ENCODE measurements at regions of chr6 and their contacts with region 1.

Region 1: DNA sequence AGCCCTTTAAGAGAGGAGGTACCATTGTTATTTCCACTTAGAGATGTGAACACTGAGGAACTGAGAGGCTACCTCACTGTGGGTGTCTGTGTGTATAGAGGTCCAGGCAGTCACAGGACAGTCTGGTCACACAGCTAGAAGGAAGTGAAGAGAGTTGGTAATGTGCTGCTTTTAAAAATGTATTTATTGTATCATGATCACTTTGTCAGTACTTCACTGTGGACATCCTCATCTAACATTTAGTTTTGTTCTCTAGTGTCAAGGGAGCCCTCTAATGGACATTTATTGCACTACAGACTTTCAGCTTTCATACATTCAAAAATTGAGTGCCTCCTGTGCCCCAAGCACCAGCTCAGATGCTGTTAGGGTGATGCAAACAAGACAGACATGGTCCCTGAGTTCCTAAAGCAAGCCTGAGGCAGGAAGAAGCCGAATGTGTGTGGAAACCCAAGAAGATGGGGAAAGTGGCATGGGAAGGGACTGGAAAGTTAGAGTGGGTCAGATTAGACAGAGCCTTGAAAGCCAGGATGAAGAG is 123.0 kb downstream of the SLC16A10 start:
- DNase-seq: peak; percentile 73
- ATAC-seq: peak; percentile 91
- H3K4me3 ChIP-seq: no peak overlapping the region
- H3K27ac ChIP-seq: no peak overlapping the region
- H3K4me1 ChIP-seq: no peaks in the 10 kb centered on the region
- H3K27me3 ChIP-seq: peaks cover 6% of the 10 kb centered on the region; the same call in 1 of the 2 replicates
- CTCF ChIP-seq: peak; percentile 93

Region 2: GRCh38 chr6:110528101-110528929 is 681.9 kb before region 1 on chr6:
- CTCF ChIA-PET with region 1: no interaction called
- POLR2A ChIA-PET with region 1: no interaction called
- in situ Hi-C with region 1: no loop called
- intact Hi-C with region 1: loop called (anchors 10 kb)
- DNase-seq: peak; percentile 86
- ATAC-seq: peak; percentile 85
- H3K4me3 ChIP-seq: no peak overlapping the region
- H3K27ac ChIP-seq: peak overlapping the region; percentile 58; the same call in 1 of the 2 replicates
- H3K4me1 ChIP-seq: peaks cover 17% of the 10 kb centered on the region
- H3K27me3 ChIP-seq: no peaks in the 10 kb centered on the region
- CTCF ChIP-seq: peak; percentile 90

Region 3: GRCh38 chr6:110990840-110991576 is 219.3 kb before region 1 on chr6:
- CTCF ChIA-PET with region 1: interaction called, 10 read pairs
- POLR2A ChIA-PET with region 1: no interaction called
- in situ Hi-C with region 1: no loop called
- intact Hi-C with region 1: no loop called
- DNase-seq: no peak
- ATAC-seq: no peak
- H3K4me3 ChIP-seq: no peak overlapping the region
- H3K27ac ChIP-seq: no peak overlapping the region
- H3K4me1 ChIP-seq: no peaks in the 10 kb centered on the region
- H3K27me3 ChIP-seq: no peaks in the 10 kb centered on the region
- CTCF ChIP-seq: no peak

Region 4: DNA sequence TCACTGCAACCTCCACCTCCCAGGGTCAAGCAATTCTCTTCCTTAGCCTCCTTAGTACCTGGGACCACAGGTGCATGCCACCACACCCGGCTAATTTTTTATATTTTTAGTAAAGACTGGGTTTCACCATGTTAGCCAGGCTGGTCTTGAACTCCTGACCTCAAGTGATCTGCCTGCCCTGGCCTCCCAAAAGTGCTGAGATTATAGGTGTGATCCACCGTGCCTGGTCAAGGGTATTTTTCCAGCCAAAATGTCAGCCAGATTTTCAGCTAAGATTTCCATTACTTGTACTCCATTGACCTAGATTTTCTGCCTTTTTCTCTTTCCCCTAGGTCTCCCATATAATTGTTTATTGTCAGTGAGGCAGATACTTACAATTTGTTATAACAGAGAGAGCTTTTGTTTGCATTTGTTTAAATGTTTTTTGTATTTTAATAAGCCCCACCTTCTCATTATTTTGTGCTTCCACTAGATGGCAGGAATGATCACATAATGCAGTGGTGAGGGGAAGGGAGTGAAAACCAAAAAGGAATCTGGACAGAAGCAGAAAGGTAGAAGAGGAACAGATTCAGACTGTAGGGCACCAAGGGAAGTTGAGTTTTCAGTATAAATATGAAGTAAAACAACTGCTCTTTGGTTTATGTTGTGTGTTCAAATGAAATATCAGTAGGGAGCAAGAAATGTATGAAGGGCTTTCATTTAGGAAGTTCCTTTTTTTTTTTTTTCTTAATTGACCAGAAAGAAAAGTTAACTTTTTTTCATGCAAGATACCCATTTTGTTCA is 198.7 kb before region 1 on chr6:
- CTCF ChIA-PET with region 1: interaction called, 6 read pairs
- POLR2A ChIA-PET with region 1: no interaction called
- in situ Hi-C with region 1: no loop called
- intact Hi-C with region 1: loop called (anchors 5 kb)
- DNase-seq: peak; percentile 36
- ATAC-seq: peak; percentile 85
- H3K4me3 ChIP-seq: no peak overlapping the region
- H3K27ac ChIP-seq: no peak overlapping the region
- H3K4me1 ChIP-seq: no peaks in the 10 kb centered on the region
- H3K27me3 ChIP-seq: no peaks in the 10 kb centered on the region
- CTCF ChIP-seq: no peak; the same call in 1 of the 2 replicates

Region 5: DNA sequence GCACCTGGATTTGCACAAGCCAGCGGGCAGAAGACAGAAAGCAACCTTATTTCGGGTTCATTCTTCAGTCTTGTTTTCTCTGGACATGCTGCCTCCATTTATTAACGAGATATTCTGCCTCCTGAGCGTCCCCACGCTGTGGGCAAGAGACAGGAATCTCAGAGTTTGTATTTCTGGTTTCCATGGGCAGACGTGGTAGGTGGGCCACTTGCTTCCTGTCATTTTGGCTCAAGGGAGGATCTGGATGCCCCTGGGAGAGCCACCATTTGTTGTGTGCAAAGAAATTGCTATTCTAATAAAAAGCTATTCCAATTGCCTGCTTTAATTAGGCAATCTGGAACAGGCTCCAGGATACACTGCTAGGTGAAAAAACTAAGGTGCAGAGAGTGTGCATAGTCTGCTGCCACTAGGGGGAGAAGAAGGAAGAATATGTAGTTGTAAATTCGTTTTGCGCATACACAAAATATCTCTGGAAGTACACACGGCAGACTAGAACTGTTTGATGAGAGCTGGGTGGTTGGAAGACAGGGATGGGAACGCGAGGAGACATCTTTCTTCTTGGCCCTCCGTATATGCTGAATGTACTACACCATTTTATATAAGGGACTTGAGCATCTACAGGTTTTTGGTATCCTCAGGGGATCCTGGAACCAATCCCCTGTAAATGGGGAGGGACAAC is 153.0 kb before region 1 on chr6:
- CTCF ChIA-PET with region 1: interaction called, 4 read pairs
- POLR2A ChIA-PET with region 1: no interaction called
- in situ Hi-C with region 1: no loop called
- intact Hi-C with region 1: loop called (anchors 1 kb)
- DNase-seq: peak; percentile 47
- ATAC-seq: peak; percentile 90
- H3K4me3 ChIP-seq: no peak overlapping the region
- H3K27ac ChIP-seq: no peak overlapping the region
- H3K4me1 ChIP-seq: peaks cover 3% of the 10 kb centered on the region; the same call in 1 of the 2 replicates
- H3K27me3 ChIP-seq: peaks cover 2% of the 10 kb centered on the region; the same call in 1 of the 2 replicates
- CTCF ChIP-seq: peak; percentile 95

Region 6: DNA sequence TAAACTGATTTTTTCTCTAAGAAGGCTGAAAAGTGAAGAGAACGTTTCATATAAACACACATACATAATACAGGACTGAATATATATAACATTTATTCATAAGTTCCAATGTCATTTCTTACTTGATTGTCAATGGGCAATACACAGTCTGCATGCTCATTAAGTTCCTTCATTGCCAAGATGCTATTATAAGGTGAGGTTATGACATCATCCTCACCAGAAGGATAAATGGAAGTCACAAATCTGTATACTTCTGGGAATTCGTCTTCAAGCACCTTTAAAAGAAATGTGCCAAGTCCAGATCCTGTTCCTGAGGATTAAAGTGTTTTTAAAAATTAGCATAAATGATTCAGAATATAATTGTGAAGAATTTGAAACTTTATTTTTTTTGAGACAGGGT is 865.9 kb after region 1 on chr6:
- CTCF ChIA-PET with region 1: no interaction called
- POLR2A ChIA-PET with region 1: interaction called, 23 read pairs
- in situ Hi-C with region 1: no loop called
- intact Hi-C with region 1: no loop called
- DNase-seq: no peak
- ATAC-seq: no peak
- H3K4me3 ChIP-seq: no peak overlapping the region
- H3K27ac ChIP-seq: no peak overlapping the region
- H3K4me1 ChIP-seq: no peaks in the 10 kb centered on the region
- H3K27me3 ChIP-seq: no peaks in the 10 kb centered on the region
- CTCF ChIP-seq: no peak

Measured in Panc1 (cell line).